Gastrocnemius medialis (tissue), 4 donors: ENCODE measurements at regions of chr10 and their contacts with region 1.

Region 1: DNA sequence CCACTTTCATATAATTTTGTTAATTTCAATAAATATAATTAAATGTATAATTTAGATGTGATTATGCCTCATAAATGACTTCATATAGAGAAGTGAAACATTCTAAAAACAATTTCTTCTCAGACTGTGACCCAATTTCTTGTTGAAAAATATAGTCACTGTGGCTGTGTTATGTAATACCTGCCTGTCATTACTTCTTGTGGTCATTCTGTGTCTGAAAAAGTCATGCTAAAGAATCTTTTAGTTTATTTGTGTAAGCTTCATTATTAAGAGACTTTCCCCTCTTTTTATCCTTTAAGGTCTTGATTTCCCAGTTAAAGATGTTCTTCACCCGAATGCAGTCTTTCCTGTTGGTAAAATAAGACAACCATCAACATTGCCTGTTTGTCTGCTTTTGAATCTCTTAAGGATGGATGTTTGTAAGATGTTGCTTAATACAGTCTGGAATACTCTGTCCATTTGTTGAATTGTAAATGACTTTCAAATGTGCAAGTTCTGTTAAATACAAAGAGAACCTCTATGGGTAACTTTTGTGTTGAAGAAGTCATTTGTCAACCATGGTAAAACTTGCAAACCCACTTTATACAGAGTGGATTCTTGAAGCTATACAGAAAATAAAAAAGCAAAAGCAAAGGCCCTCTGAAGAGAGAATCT is 16.0 kb downstream of the KAT6B start:
- DNase-seq: no peak
- ATAC-seq: no peak
- H3K4me3 ChIP-seq: no peak overlapping the region
- H3K27ac ChIP-seq: peak overlapping the region; percentile 21 to 71 (median 60)
- H3K4me1 ChIP-seq: peaks cover 30 to 58% of the 10 kb centered on the region in 2 donors
- H3K27me3 ChIP-seq: no peaks in the 10 kb centered on the region
- CTCF ChIP-seq: no peak
- POLR2A ChIP-seq: no peak

Region 2: GRCh38 chr10:74924251-74924951 is 82.0 kb after region 1 on chr10:
- in situ Hi-C with region 1: no loop called
- intact Hi-C with region 1: loop called (anchors 5 kb)
- DNase-seq: no peak
- ATAC-seq: peak; percentile 59 to 73
- H3K4me3 ChIP-seq: peak overlapping the region in 1 of 4 donors; percentile 3
- H3K27ac ChIP-seq: peak overlapping the region; percentile 49 to 73 (median 59)
- H3K4me1 ChIP-seq: peaks cover 75 to 76% of the 10 kb centered on the region in 2 donors
- H3K27me3 ChIP-seq: no peaks in the 10 kb centered on the region
- CTCF ChIP-seq: no peak
- POLR2A ChIP-seq: no peak

Region 3: DNA sequence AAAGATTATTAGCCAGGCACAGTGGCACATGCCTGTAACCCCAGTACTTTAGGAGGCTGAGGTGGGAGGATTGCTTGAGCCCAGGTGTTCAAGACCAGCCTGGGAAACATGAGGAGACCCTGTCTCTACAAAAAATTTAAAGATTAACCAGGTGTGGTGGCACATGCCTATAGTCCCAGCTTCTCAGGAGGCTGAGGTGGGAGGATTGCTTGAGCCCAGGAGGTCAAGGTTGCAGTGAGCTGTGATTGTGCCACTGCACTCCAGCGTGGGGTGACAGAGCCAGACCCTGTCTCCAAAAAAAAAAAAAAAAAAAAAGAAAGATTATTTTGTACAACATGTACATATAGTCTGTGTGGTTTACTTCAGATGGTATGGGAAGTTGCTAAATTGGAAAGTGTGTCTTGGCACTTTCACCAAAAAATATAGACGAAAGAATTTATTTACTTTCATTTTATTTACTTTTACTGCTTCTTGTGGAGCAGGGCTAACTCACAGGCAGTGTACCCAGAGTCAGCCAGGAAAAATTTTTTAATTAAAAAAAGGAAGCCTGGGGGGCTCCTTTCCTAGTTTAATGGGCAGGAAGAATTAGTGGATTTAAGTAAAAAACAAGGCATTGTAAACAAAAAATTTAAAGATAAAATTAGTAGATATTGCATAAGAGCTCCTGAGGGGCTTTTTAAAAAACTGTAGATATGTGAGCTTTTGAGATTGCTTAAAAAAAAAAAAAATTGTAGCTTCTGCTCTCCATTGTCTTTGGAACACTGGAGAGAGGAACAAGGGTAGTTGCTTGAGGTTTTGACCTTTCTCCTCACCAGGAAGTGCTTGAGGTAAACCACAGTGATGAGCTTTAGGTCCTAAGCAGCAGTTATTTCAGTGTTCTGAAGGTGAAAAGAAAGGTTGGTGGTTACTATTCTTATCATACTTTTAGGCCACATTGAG is 323.5 kb after region 1 on chr10:
- in situ Hi-C with region 1: no loop called
- intact Hi-C with region 1: no loop called
- DNase-seq: no peak
- ATAC-seq: no peak
- H3K4me3 ChIP-seq: no peak overlapping the region
- H3K27ac ChIP-seq: peak overlapping the region in 3 of 4 donors; percentile 2 to 80 (median 20)
- H3K4me1 ChIP-seq: peaks cover 26 to 32% of the 10 kb centered on the region in 2 donors
- H3K27me3 ChIP-seq: no peaks in the 10 kb centered on the region
- CTCF ChIP-seq: no peak
- POLR2A ChIP-seq: no peak

Region 4: GRCh38 chr10:75229971-75230370 is 387.5 kb after region 1 on chr10:
- in situ Hi-C with region 1: loop called in 1 of 4 experiments (anchors 10 kb)
- intact Hi-C with region 1: no loop called
- DNase-seq: no peak
- ATAC-seq: no peak
- H3K4me3 ChIP-seq: no peak overlapping the region
- H3K27ac ChIP-seq: peak overlapping the region; percentile 72 to 95 (median 76)
- H3K4me1 ChIP-seq: peaks cover 53 to 56% of the 10 kb centered on the region in 2 donors
- H3K27me3 ChIP-seq: no peaks in the 10 kb centered on the region
- CTCF ChIP-seq: no peak
- POLR2A ChIP-seq: no peak